MCF 10A (cell line): ENCODE measurements at regions of chr1 and their contacts with region 1.

Region 1: DNA sequence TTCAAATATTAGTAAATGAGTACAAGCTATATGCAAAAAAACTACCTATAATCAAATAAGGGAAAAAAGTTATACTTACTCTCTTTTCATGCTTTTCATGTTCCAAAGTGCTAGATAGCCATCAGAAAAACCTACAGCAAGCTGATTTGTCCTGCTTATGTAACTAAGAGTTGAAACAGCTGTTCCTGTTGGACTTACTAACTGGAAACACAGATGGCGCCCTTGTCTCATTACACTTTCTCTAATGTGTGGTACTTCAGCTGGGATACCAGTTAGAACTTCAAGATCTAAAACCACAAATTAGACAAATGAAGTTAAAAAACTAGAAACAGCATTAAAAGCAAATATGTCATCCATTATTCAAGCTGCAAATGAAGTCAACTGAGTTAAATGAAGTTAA is 24.3 kb downstream of the AHCTF1 start:
- DNase-seq: peak; percentile 78
- H3K4me3 Mint-ChIP-seq: no peak overlapping the region
- H3K27ac Mint-ChIP-seq: peak overlapping the region; percentile 25
- H3K4me1 Mint-ChIP-seq: no peaks in the 10 kb centered on the region
- H3K27me3 Mint-ChIP-seq: no peaks in the 10 kb centered on the region
- CTCF ChIP-seq: peak; percentile 74

Region 2: DNA sequence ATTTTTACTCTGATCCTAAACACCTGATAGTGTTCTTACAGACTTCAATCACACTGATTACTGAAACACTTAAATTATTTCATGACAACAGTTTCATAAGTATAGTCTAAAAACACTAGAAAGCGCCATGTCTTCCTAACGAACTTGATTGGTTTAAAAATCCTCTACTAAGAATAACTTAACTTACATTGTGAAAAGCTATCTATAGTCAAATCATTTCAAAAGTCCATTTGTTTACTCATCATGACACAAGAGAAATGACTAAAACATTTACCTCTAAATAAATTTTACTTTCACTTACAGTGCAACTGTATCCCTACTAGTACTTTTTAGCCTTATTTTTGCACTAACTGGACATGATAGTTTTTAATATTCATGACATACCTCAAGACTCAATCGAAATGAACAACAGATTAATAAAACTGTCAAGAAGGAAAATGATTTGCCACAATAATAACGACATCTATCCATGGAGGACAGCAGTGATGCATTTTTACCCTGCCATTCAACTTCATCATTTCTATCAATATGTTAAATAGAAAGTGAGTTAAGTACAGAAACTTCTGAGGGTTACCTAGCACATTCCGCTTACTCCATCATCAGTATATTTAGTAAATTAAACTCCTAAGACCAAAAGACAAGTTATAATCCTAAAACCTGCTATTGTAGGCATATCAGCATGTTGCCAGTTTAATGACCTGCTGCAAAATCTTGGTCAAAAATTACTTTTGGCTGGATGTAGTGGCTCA is 14.1 kb before region 1 on chr1:
- CTCF ChIA-PET with region 1: interaction called, 31 read pairs
- POLR2A ChIA-PET with region 1: interaction called, 6 read pairs
- intact Hi-C with region 1: no loop called
- DNase-seq: no peak
- H3K4me3 Mint-ChIP-seq: no peak overlapping the region
- H3K27ac Mint-ChIP-seq: peak overlapping the region; percentile 58
- H3K4me1 Mint-ChIP-seq: no peaks in the 10 kb centered on the region
- H3K27me3 Mint-ChIP-seq: no peaks in the 10 kb centered on the region
- CTCF ChIP-seq: no peak

Region 3: GRCh38 chr1:246923482-246923881 is 16.0 kb after region 1 on chr1:
- CTCF ChIA-PET with region 1: interaction called, 45 read pairs
- POLR2A ChIA-PET with region 1: interaction called, 4 read pairs
- intact Hi-C with region 1: no loop called
- DNase-seq: no peak
- H3K4me3 Mint-ChIP-seq: no peak overlapping the region
- H3K27ac Mint-ChIP-seq: no peak overlapping the region
- H3K4me1 Mint-ChIP-seq: peaks cover 25% of the 10 kb centered on the region
- H3K27me3 Mint-ChIP-seq: no peaks in the 10 kb centered on the region
- CTCF ChIP-seq: no peak

Region 4: GRCh38 chr1:247576495-247576894 is 669.0 kb after region 1 on chr1:
- CTCF ChIA-PET with region 1: interaction called, 3 read pairs
- POLR2A ChIA-PET with region 1: no interaction called
- intact Hi-C with region 1: loop called (anchors 2 kb)
- DNase-seq: peak; percentile 49
- H3K4me3 Mint-ChIP-seq: no peak overlapping the region
- H3K27ac Mint-ChIP-seq: no peak overlapping the region
- H3K4me1 Mint-ChIP-seq: peaks cover 10% of the 10 kb centered on the region
- H3K27me3 Mint-ChIP-seq: no peaks in the 10 kb centered on the region
- CTCF ChIP-seq: peak; percentile 75